H1 (cell line): ENCODE measurements at regions of chr12 and their contacts with region 1.

Region 1: DNA sequence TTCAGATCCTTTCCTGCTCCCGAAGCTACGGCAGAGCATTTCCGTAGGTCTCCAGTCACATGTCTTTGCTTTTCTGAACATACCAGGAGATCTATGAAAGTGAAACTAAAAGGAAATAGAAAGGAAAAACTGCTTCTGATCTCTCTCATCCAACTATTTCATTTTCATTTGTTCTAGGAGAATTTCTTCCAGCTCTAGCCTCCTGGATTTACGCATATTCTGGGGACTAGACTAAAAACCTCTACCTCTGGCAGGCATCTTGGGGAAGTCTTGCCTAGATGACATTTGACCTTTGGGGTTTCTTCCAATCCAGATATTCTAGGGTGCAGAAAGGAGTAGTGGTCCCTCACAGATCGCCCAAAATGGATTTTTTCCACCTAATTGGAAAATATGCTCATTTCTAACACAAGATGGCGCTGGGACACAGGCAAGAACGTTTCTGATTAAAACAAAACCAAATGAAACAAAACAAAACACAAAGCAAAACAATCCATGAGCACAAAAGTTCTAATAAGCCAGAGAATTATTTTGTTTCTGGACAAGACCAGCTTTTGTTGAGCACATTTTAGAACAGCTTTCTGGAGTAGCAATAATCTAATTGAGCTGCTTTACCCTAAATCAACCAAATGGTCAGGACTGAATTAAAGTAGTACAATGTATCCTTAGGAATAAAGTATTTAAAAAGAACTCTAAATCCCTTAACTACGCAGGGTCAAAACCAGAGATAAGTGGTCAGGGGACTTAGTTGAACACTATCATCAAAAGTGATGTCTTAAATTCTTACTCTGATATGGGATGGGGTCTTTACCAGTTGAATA is 12.3 kb upstream of the PARP11 start:
- DNase-seq: no peak
- H3K4me3 ChIP-seq: no peak overlapping the region
- H3K27ac ChIP-seq: no peak overlapping the region
- H3K4me1 ChIP-seq: peaks cover 0 to 2% (median under 1%) of the 10 kb centered on the region in 4 experiments; a peak in 5 of 7 replicates
- H3K27me3 ChIP-seq: no peaks in the 10 kb centered on the region; a peak in 1 of 7 replicates
- CTCF ChIP-seq: peak in 2 of 3 experiments; percentile 67 to 70; a peak in 3 of 4 replicates
- EP300 ChIP-seq: no peak
- POLR2A ChIP-seq: no peak
- RAD21 ChIP-seq: peak; percentile 93

Region 2: DNA sequence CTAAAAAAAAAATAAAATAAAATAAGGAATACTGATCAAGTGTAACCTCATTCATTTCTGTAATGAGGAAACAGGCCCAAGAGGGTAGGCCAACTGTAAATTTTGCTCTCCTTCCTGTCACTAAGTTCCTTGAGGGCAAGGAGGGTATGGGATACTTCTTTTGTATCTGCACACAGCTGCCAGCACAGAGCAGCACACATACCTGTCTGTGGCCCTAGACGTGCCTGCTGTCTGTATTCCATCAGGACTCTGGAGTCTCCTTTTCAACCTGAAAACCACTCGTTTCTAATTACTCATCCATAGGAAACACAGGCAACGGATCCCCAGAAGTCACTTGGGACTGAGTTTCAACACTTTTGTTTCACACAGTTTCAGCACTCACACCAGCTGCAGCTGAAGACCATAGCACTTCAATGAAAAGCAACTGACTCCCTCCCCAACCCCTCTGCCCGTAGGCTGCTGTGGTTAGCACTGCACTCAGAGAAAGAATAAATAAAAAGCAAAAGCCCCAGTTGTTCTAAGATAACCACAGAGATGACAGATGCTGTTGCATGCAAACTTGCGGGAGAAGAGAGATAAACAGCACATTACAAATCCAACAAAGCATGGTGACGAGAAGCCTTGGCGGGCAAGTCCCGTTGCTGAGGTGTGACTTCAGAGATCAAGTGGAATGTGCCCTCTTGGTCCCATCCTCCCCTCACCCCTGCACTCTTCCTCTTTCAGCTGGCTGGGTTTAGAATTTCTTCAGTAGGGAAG is 157.4 kb before region 1 on chr12:
- CTCF ChIA-PET with region 1: no interaction called
- POLR2A ChIA-PET with region 1: no interaction called
- DNase-seq: no peak
- H3K4me3 ChIP-seq: no peak overlapping the region
- H3K27ac ChIP-seq: no peak overlapping the region; the same call in 1 of the 2 replicates
- H3K4me1 ChIP-seq: peaks cover 0 to 12% (median 4%) of the 10 kb centered on the region in 4 experiments; a peak in 4 of 7 replicates
- H3K27me3 ChIP-seq: no peaks in the 10 kb centered on the region
- CTCF ChIP-seq: no peak
- EP300 ChIP-seq: no peak
- POLR2A ChIP-seq: no peak
- RAD21 ChIP-seq: no peak

Region 3: DNA sequence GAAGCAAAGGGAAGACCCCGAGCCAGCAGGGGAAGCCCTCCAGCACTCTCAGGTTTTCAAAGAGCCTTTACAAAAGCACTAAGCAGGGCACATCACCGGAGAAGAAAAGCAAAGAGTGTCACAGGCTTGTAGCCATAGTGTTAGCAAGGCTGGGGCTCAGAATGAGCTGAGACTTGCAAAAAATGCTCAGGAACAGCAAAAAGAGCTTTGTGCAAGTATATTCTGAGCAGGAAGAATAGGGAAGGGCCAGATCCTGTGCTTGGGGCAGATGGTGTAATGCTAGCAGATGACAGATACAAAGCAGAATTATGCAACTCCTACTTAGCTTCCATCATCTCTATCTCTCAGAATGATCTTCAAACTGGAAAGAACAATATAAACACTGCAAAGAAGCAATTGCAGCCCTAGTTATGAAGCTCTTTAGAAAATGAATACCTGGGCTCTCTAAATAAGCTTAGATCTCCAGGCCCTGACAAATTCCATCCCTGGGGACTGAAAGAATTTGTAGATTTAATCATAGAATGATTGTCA is 11.4 kb after region 1 on chr12:
- CTCF ChIA-PET with region 1: interaction called, 16 read pairs
- POLR2A ChIA-PET with region 1: interaction called, 3 read pairs
- DNase-seq: no peak
- H3K4me3 ChIP-seq: no peak overlapping the region
- H3K27ac ChIP-seq: no peak overlapping the region
- H3K4me1 ChIP-seq: no peaks in the 10 kb centered on the region
- H3K27me3 ChIP-seq: no peaks in the 10 kb centered on the region
- CTCF ChIP-seq: no peak
- EP300 ChIP-seq: no peak
- POLR2A ChIP-seq: no peak
- RAD21 ChIP-seq: no peak

Region 4: GRCh38 chr12:3913278-3913677 is 27.8 kb after region 1 on chr12:
- CTCF ChIA-PET with region 1: interaction called, 12 read pairs
- POLR2A ChIA-PET with region 1: interaction called, 3 read pairs
- DNase-seq: no peak
- H3K4me3 ChIP-seq: no peak overlapping the region
- H3K27ac ChIP-seq: no peak overlapping the region
- H3K4me1 ChIP-seq: peaks cover 0 to 6% (median 0%) of the 10 kb centered on the region in 4 experiments; a peak in 3 of 7 replicates
- H3K27me3 ChIP-seq: no peaks in the 10 kb centered on the region
- CTCF ChIP-seq: no peak
- EP300 ChIP-seq: no peak
- POLR2A ChIP-seq: no peak
- RAD21 ChIP-seq: no peak

Region 5: GRCh38 chr12:3947781-3948180 is 62.3 kb after region 1 on chr12:
- CTCF ChIA-PET with region 1: interaction called, 13 read pairs
- POLR2A ChIA-PET with region 1: no interaction called
- DNase-seq: no peak
- H3K4me3 ChIP-seq: no peak overlapping the region
- H3K27ac ChIP-seq: no peak overlapping the region
- H3K4me1 ChIP-seq: peaks cover 0 to 14% (median 2%) of the 10 kb centered on the region in 4 experiments; a peak in 2 of 7 replicates
- H3K27me3 ChIP-seq: peaks cover 0 to 5% (median 0%) of the 10 kb centered on the region in 4 experiments; a peak in 1 of 7 replicates
- CTCF ChIP-seq: no peak
- EP300 ChIP-seq: no peak
- POLR2A ChIP-seq: no peak
- RAD21 ChIP-seq: no peak

Region 6: GRCh38 chr12:3988519-3989448 is 103.3 kb after region 1 on chr12:
- CTCF ChIA-PET with region 1: interaction called, 33 read pairs
- POLR2A ChIA-PET with region 1: no interaction called
- DNase-seq: no peak
- H3K4me3 ChIP-seq: no peak overlapping the region
- H3K27ac ChIP-seq: no peak overlapping the region
- H3K4me1 ChIP-seq: no peaks in the 10 kb centered on the region; a peak in 1 of 7 replicates
- H3K27me3 ChIP-seq: no peaks in the 10 kb centered on the region
- CTCF ChIP-seq: no peak
- EP300 ChIP-seq: no peak
- POLR2A ChIP-seq: no peak
- RAD21 ChIP-seq: no peak

Region 7: DNA sequence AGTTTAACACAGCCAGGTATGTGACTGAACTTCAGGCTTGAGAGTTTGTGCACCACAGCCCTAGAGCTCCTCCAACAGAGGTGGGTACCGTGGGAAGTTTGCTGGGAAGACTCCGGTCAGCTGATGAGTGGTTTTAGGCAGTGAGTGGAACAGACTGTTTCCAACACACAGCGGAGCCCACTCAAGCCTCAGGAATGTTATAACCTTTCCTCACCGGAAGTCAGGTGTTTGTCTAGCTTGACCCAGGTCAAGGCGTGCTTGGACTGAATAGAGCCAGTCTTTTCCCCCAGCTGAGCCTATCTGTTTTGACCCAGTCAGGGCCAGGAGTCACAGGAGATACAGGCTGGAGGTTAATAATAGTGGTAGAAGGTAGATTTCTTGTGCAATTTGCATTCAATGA is 126.1 kb after region 1 on chr12:
- CTCF ChIA-PET with region 1: interaction called, 10 read pairs
- POLR2A ChIA-PET with region 1: no interaction called
- DNase-seq: no peak
- H3K4me3 ChIP-seq: no peak overlapping the region
- H3K27ac ChIP-seq: no peak overlapping the region
- H3K4me1 ChIP-seq: no peaks in the 10 kb centered on the region
- H3K27me3 ChIP-seq: no peaks in the 10 kb centered on the region
- CTCF ChIP-seq: no peak
- EP300 ChIP-seq: no peak
- POLR2A ChIP-seq: no peak
- RAD21 ChIP-seq: no peak

Region 8: DNA sequence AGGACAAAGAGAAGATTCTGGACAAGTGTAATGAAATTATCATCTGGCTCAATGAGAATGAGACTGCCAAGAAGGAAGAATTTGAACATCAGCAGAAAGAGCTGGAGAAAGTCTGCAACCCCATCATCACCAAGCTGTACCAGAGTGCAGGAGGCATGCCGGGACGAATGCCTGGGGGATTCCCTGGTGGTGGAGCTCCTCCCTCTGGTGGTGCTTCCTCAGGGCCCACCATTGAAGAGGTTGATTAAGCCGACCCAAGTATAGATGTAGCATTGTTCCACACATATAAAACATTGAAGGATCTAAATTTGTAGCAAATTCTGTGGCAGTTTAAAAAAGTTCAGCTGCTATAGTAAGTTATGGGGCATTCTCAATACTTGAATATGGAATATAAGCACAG is 213.8 kb after region 1 on chr12:
- CTCF ChIA-PET with region 1: interaction called, 47 read pairs
- POLR2A ChIA-PET with region 1: interaction called, 3 read pairs
- DNase-seq: no peak
- H3K4me3 ChIP-seq: no peak overlapping the region
- H3K27ac ChIP-seq: no peak overlapping the region
- H3K4me1 ChIP-seq: no peaks in the 10 kb centered on the region
- H3K27me3 ChIP-seq: no peaks in the 10 kb centered on the region
- CTCF ChIP-seq: peak; percentile 26 to 48 (median 46)
- EP300 ChIP-seq: no peak
- POLR2A ChIP-seq: no peak
- RAD21 ChIP-seq: peak; percentile 72 to 78